ENCODE measurements at regions of chr3 and their contacts with region 1.

Region 1: GRCh38 chr3:110352841-110353604 is 718.6 kb upstream of the NECTIN3 start:
- DNase-seq: no peak
- ATAC-seq: no peak
- H3K4me3 ChIP-seq: no peak overlapping the region
- H3K27ac ChIP-seq: no peak overlapping the region
- H3K4me1 ChIP-seq: no peaks in the 10 kb centered on the region
- H3K27me3 ChIP-seq: no peaks in the 10 kb centered on the region
- CTCF ChIP-seq: no peak
- POLR2A ChIP-seq: no peak

Region 2: DNA sequence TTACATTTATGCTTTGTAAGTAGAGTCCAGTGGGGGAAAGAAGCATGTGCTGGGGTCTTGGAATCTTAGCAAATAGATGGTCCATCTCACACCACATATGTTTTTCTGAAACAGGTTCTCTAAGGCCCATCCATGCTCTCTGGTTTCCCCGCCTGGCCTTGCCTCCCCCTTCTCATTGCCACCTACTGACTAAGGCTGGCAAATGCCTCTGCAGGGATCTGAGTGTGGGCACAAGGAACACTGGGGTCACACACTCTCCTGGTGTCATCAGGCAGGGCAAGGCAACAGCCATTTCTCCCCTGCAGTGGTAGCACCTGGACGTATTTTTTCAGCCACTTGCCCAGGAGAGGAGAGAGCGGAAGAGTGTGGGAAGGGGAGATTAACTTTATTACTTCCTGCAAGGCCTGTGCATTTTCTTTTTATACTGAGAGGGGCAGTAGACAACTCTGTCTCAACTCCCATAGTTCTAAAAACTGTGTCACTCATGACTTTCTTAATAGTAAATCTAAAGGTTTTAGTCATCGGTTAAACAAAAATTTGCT is 85.6 kb before region 1 on chr3:
- in situ Hi-C with region 1: loop called in 1 of 4 experiments (anchors 25 kb)
- intact Hi-C with region 1: no loop called
- DNase-seq: no peak
- ATAC-seq: no peak
- H3K4me3 ChIP-seq: no peak overlapping the region
- H3K27ac ChIP-seq: no peak overlapping the region
- H3K4me1 ChIP-seq: no peaks in the 10 kb centered on the region
- H3K27me3 ChIP-seq: no peaks in the 10 kb centered on the region
- CTCF ChIP-seq: no peak
- POLR2A ChIP-seq: no peak

Region 3: DNA sequence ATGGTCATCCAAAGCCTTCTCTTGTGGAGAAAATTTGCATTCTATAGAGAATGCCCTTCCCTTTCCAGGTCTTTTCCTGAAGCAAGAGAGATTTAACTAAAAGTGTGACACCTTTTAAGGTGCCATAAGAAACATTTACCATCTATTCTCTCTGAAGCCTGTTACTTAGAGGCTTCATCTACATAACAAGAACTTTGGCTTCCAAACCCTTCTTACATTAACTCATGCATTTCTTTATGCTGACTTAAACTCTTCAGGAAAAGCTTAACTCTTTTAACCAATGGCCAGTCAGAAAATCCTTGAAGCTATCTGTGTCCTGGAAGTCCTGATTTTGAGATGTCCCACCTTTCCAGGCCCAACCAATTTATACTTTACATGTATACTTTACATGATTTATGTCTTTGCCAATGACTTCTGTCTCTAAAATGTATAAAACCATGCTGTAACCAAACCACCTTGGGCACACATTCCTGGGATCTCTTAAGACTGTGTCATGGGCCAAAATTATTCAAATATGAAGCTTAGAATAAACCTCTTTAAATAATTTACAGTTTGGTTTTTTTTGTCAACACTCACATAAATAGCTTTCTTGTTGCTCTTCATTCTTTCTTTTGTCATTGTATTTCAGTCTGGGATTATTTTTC is 245.9 kb after region 1 on chr3:
- in situ Hi-C with region 1: no loop called
- intact Hi-C with region 1: no loop called
- DNase-seq: no peak
- ATAC-seq: no peak
- H3K4me3 ChIP-seq: no peak overlapping the region
- H3K27ac ChIP-seq: no peak overlapping the region
- H3K4me1 ChIP-seq: no peaks in the 10 kb centered on the region
- H3K27me3 ChIP-seq: no peaks in the 10 kb centered on the region
- CTCF ChIP-seq: no peak
- POLR2A ChIP-seq: no peak

Region 4: DNA sequence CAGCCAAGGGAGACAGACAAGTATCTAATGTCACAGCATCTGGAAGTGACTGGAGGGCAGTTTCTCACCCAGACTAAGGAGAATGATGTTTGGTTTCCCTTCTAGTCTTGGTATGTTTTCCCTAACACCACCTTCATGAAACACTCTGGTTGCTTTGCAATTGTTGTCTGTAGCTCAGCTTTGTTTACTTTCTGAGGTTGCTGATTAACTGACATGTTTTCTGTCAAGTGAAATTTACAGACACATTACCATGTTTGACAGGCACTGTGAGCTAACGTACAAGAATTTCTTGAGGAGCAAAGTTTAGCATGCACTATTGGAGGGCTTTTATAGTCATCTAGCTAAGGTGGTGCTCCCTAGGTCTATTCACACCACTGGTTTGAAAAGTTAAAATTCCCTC is 587.0 kb after region 1 on chr3:
- in situ Hi-C with region 1: no loop called
- intact Hi-C with region 1: no loop called
- DNase-seq: no peak
- ATAC-seq: no peak
- H3K4me3 ChIP-seq: no peak overlapping the region
- H3K27ac ChIP-seq: no peak overlapping the region
- H3K4me1 ChIP-seq: no peaks in the 10 kb centered on the region
- H3K27me3 ChIP-seq: no peaks in the 10 kb centered on the region
- CTCF ChIP-seq: no peak
- POLR2A ChIP-seq: no peak